ENCODE measurements at regions of chr19 and their contacts with region 1.

Region 1: DNA sequence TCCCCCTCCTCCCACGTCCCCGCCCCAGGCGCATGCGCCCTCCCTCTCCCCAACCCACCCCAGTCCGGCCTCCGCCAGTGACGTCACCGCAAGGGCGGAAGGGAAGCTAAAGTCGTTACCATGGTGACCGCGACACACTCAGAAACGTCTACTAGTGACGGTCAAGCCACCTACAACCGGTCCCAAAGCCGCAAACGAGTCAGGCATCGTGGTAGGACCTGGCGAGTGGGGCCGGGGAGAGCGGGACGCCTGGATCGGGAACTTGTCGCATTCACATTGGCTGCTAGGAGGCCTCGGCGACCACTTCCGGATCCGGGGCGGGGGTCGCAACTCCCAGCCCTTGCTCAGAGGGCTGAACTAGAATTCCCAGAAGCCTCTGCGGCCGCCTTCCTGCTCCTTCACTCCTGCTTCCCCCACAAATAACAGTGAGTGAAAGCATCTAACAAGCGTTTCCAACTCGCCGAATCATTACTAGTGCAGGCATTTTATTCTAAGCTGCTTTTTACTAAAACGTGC is at the start of gene ZSCAN5A:
- DNase-seq: peak; percentile 62
- H3K4me3 ChIP-seq: peak within 1 kb of the TSS; percentile 95
- CTCF ChIP-seq: no peak

Region 2: GRCh38 chr19:56299688-56300087 is 14.9 kb before region 1 on chr19:
- CTCF ChIA-PET with region 1: interaction called, 12 read pairs
- POLR2A ChIA-PET with region 1: no interaction called
- DNase-seq: no peak
- H3K4me3 ChIP-seq: no peak overlapping the region
- CTCF ChIP-seq: no peak